ENCODE measurements at regions of chr17 and their contacts with region 1.

Region 1: GRCh38 chr17:4789901-4790704 is 1.3 kb downstream of the GLTPD2 start:
- DNase-seq: peak; percentile 60 to 95 (median 88)

Region 2: GRCh38 chr17:4565209-4566141 is 224.6 kb before region 1 on chr17:
- intact Hi-C with region 1: no loop called
- DNase-seq: peak; percentile 50 to 89 (median 75)

Region 3: GRCh38 chr17:4665027-4665426 is 125.1 kb before region 1 on chr17:
- intact Hi-C with region 1: no loop called
- DNase-seq: no peak

Region 4: GRCh38 chr17:4709794-4710692 is 80.1 kb before region 1 on chr17 and contains the start of gene ARRB2:
- intact Hi-C with region 1: loop called (anchors 2 kb)
- DNase-seq: peak; percentile 96 to 99 (median 99)

Region 5: GRCh38 chr17:4733073-4733531 is 57.0 kb before region 1 on chr17:
- intact Hi-C with region 1: loop called (anchors 5 kb)
- DNase-seq: peak in 12 of 42 donors; percentile 8 to 60 (median 30)

Region 6: DNA sequence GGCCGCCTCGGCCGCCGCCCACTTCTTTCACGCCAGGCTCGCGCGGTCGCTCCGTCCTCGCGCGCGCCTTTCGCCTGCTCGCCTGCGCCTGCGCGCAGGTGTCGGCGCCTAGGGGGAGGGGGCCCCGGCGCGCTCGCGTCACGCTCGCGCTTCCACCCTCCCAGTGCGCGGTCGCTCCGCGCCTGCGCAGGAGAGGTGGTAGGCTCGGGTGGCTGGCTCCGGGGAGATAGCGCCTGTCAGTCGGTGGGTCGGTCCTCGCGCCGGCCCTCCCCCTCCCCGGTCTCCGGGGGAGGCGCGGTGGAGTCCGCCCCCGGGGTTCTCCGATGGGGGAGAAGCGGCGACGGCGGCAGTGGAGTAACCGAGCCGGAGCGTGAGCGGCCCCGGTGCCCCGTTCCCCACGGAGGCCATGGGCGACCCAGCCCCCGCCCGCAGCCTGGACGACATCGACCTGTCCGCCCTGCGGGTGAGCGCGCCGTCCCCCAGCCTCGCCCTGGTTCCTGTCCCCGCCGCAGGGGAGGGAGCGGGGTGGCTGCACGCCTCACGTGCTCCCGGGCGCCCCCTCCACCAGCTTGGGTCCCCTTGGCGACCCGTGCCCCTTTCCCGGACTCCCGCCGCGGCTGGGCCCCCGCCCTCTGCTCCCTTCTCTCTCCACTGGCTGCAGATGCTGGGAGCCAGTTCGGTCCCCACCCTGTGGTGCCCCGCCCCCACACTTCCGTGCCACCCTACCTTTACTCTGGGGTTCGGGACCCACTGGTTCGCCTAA is 43.3 kb after region 1 on chr17 and contains the start of gene MINK1:
- intact Hi-C with region 1: loop called (anchors 2 kb)
- DNase-seq: peak; percentile 55 to 94 (median 88)

Region 7: GRCh38 chr17:4891411-4892342 is 101.6 kb after region 1 on chr17:
- intact Hi-C with region 1: loop called (anchors 2 kb)
- DNase-seq: no peak